K562 (cell line): ENCODE measurements at regions of chr1 and their contacts with region 1.

Region 1: DNA sequence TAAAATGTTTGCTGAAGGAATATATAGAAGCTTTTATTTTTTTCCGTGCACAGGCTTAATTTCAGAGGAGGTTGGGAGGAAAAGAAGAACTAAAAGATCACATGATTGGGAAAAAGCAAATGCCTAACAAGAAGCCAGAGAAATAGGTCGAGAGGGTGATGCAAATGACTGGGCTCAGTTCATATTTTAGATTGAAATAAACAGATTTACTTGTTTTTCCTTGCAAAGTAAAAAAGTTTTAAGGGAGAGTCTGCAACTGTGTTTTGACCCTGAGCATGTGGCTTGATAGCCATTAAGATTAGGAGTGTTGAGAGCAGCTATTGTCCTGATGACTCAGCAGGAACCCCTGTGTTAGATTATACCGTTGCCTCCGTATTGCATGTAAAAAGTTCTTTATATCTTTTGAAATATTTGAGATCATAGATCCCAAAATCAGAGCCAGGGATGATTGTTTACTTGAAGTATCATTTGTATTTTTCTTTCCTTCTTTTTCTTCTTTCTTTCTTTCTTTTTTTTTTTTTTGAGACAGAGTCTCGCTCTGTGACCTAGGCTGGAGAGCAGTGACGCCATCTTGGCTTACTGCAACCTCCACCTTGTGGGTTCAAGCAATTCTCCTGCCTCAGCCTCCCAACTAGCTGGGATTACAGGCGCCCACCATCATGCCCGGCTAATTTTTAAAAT is 20.2 kb downstream of the CLIC4 start:
- DNase-seq: peak; percentile 62 to 87 (median 74)
- ATAC-seq: peak; percentile 86
- H3K4me3 ChIP-seq: no peak overlapping the region
- H3K27ac ChIP-seq: peak overlapping the region; percentile 80
- H3K4me1 ChIP-seq: peaks cover 21 to 44% of the 10 kb centered on the region in 2 experiments
- H3K27me3 ChIP-seq: no peaks in the 10 kb centered on the region
- CTCF ChIP-seq: no peak
- EP300 ChIP-seq: peak; percentile 82
- POLR2A ChIP-seq: peak; percentile 47; the same call in 1 of the 2 replicates
- RAD21 ChIP-seq: peak in 1 of 2 experiments; percentile 27; a peak in 1 of 4 replicates

Region 2: GRCh38 chr1:24754229-24754628 is 11.2 kb before region 1 on chr1:
- CTCF ChIA-PET with region 1: no interaction called
- POLR2A ChIA-PET with region 1: interaction called, 75 read pairs
- in situ Hi-C with region 1: no loop called
- intact Hi-C with region 1: no loop called
- DNase-seq: no peak
- ATAC-seq: no peak
- H3K4me3 ChIP-seq: no peak overlapping the region
- H3K27ac ChIP-seq: no peak overlapping the region
- H3K4me1 ChIP-seq: peaks cover 0 to 3% of the 10 kb centered on the region in 2 experiments; a peak in 3 of 5 replicates
- H3K27me3 ChIP-seq: no peaks in the 10 kb centered on the region
- CTCF ChIP-seq: no peak
- EP300 ChIP-seq: no peak
- POLR2A ChIP-seq: no peak
- RAD21 ChIP-seq: no peak

Region 3: GRCh38 chr1:24775916-24776315 is 10.5 kb after region 1 on chr1:
- CTCF ChIA-PET with region 1: no interaction called
- POLR2A ChIA-PET with region 1: interaction called, 24 read pairs
- in situ Hi-C with region 1: no loop called
- intact Hi-C with region 1: no loop called
- DNase-seq: no peak
- ATAC-seq: 0 out of 3 replicates have a peak, but pooled peaks have one; percentile 14
- H3K4me3 ChIP-seq: no peak overlapping the region
- H3K27ac ChIP-seq: no peak overlapping the region
- H3K4me1 ChIP-seq: no peaks in the 10 kb centered on the region; a peak in 1 of 5 replicates
- H3K27me3 ChIP-seq: no peaks in the 10 kb centered on the region
- CTCF ChIP-seq: no peak
- EP300 ChIP-seq: no peak
- POLR2A ChIP-seq: no peak
- RAD21 ChIP-seq: no peak